Activated T-helper 1 cell treated with anti-CD3 and anti-CD28 coated beads, Interleukin-12 subunit alpha, Interleukin-12 subunit beta, Interleukin-2, Interleukin-4 antibody, amounts not matched to agents 30 ng/mL and 10 ng/mL and 1 ng/mL, durations not matched to agents 14 hours and 24 hours and 36 hours (primary cell): ENCODE measurements at regions of chr7 and their contacts with region 1.

Region 1: GRCh38 chr7:141654551-141654950 is 47.4 kb downstream of the DENND11 start:
- DNase-seq: peak; percentile 52
- H3K4me3 Mint-ChIP-seq: no peak overlapping the region
- H3K27ac Mint-ChIP-seq: peak overlapping the region; percentile 69
- H3K4me1 Mint-ChIP-seq: peaks cover 15% of the 10 kb centered on the region
- H3K27me3 Mint-ChIP-seq: no peaks in the 10 kb centered on the region

Region 2: GRCh38 chr7:141072548-141073172 is 581.9 kb before region 1 on chr7:
- intact Hi-C with region 1: loop called (anchors 5 kb)
- DNase-seq: peak; percentile 40
- H3K4me3 Mint-ChIP-seq: peak overlapping the region; percentile 79
- H3K27ac Mint-ChIP-seq: no peak overlapping the region
- H3K4me1 Mint-ChIP-seq: peaks cover 36% of the 10 kb centered on the region
- H3K27me3 Mint-ChIP-seq: peaks cover 39% of the 10 kb centered on the region

Region 3: DNA sequence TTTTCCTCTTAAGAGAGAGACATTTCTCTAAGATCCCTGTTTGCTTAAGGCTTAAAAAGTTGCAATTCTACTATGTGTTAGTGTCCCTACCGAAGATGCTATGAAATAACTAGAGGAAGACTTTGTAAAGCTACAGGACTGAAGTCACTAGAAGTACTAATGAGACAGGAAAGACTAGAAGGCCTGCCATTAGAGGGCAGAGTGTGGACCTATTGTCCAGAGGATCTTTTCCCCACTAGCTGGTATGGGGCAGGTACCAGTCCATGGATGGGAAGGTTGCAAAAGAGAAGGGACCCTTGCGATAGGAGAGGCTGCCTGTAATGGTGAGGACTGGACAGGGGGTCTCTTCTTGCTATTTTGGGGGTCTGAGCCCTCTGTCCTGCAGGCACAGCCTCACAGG is 402.6 kb before region 1 on chr7:
- intact Hi-C with region 1: no loop called
- DNase-seq: no peak
- H3K4me3 Mint-ChIP-seq: no peak overlapping the region
- H3K27ac Mint-ChIP-seq: no peak overlapping the region
- H3K4me1 Mint-ChIP-seq: no peaks in the 10 kb centered on the region
- H3K27me3 Mint-ChIP-seq: peaks cover 19% of the 10 kb centered on the region

Region 4: GRCh38 chr7:141533149-141533949 is 121.2 kb before region 1 on chr7:
- intact Hi-C with region 1: loop called (anchors 1 kb)
- DNase-seq: peak; percentile 34
- H3K4me3 Mint-ChIP-seq: no peak overlapping the region
- H3K27ac Mint-ChIP-seq: no peak overlapping the region
- H3K4me1 Mint-ChIP-seq: peaks cover 7% of the 10 kb centered on the region
- H3K27me3 Mint-ChIP-seq: peaks cover 20% of the 10 kb centered on the region

Region 5: GRCh38 chr7:141551094-141551781 is 103.3 kb before region 1 on chr7 and contains the start of gene AGK:
- intact Hi-C with region 1: loop called (anchors 5 kb)
- DNase-seq: peak; percentile 79
- H3K4me3 Mint-ChIP-seq: peak within 1 kb of the TSS; percentile 91
- H3K27ac Mint-ChIP-seq: peak within 1 kb of the TSS; percentile 97
- H3K4me1 Mint-ChIP-seq: peaks cover 50% of the 10 kb centered on the region
- H3K27me3 Mint-ChIP-seq: no peaks in the 10 kb centered on the region
- total RNA-seq, gene AGK: 174 and 179 TPM in 2 replicates

Region 6: GRCh38 chr7:141674702-141675101 is 20.2 kb after region 1 on chr7:
- intact Hi-C with region 1: loop called (anchors 2 kb)
- DNase-seq: no peak
- H3K4me3 Mint-ChIP-seq: no peak overlapping the region
- H3K27ac Mint-ChIP-seq: peak overlapping the region; percentile 75
- H3K4me1 Mint-ChIP-seq: peaks cover 45% of the 10 kb centered on the region
- H3K27me3 Mint-ChIP-seq: no peaks in the 10 kb centered on the region

Region 7: GRCh38 chr7:141685285-141686023 is 30.9 kb after region 1 on chr7:
- intact Hi-C with region 1: no loop called
- DNase-seq: no peak
- H3K4me3 Mint-ChIP-seq: no peak overlapping the region
- H3K27ac Mint-ChIP-seq: no peak overlapping the region
- H3K4me1 Mint-ChIP-seq: peaks cover 29% of the 10 kb centered on the region
- H3K27me3 Mint-ChIP-seq: no peaks in the 10 kb centered on the region

Region 8: DNA sequence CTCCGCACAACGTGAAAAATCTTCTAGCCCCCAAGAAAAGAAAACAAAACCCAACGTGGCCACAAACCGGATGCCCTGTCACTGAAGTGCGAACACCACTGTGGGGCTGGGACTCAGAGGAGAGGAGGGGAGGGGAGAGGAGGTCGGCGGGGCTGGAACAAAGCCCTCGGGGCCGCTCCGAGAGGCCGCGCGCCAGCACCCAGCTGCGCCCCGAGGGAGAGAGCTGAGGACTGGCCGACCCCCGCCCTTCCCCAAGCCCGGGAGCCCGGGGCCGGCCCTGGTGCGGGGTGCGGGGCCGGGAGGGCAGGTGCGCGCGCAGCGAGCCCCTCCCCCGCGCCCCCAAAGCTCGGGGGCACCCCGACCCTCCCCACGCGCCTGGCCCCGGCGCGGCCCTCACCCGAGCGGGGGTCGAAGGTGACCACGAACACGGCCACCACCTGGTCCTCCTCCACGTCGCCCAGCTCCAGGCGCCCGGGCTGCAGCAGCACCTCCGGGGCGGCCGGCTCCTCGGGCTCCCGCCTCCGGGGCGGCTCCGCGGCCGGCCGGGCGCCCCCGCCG is 47.0 kb after region 1 on chr7:
- intact Hi-C with region 1: loop called (anchors 2 kb)
- DNase-seq: peak; percentile 69
- H3K4me3 Mint-ChIP-seq: peak overlapping the region; percentile 69
- H3K27ac Mint-ChIP-seq: peak overlapping the region; percentile 58
- H3K4me1 Mint-ChIP-seq: peaks cover 49% of the 10 kb centered on the region
- H3K27me3 Mint-ChIP-seq: peaks cover 5% of the 10 kb centered on the region

Region 9: DNA sequence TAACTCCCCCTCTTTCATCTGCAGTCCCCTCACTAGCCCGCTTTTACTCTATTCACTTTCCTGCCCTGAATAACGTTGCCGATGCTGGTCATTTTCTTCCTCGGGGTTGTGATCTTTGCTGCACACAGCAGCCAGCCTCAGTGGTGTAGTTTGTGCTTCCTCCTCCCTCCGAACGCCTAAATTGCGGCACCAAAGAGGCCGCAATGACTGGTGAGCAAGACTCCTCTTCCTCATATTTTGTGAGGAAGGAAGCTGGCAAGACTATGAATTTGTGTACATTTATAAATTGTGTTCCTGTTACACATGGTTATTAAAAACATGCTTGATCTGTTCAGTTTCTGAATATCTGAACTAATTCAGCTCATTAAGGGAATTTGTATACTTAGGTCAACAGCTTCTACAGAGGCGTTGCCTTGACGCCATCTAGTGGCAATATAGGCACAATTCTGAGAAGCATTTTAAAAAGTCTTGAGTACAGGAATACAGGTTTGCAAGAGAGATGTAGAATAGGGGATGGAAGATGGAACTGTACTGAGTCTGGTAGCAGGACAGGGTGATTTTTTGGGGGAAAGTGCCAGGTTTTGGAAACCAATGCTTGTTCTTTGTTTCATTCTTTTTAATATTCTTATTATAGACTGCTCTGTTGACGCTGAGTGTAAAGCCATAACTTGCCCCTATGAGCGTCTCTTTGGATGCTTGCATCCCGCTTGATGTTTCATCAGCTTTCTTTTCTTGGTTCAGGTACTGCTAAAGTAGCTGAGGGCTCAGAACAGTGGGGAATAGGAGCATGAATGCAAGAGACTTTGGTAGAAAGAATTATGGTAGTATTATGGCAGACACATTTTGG is 131.4 kb after region 1 on chr7:
- intact Hi-C with region 1: loop called (anchors 1 kb)
- DNase-seq: no peak
- H3K4me3 Mint-ChIP-seq: no peak overlapping the region
- H3K27ac Mint-ChIP-seq: no peak overlapping the region
- H3K4me1 Mint-ChIP-seq: no peaks in the 10 kb centered on the region
- H3K27me3 Mint-ChIP-seq: no peaks in the 10 kb centered on the region